Ovary (tissue), 10 donors: ENCODE measurements at regions of chr11 and their contacts with region 1.

Region 1: DNA sequence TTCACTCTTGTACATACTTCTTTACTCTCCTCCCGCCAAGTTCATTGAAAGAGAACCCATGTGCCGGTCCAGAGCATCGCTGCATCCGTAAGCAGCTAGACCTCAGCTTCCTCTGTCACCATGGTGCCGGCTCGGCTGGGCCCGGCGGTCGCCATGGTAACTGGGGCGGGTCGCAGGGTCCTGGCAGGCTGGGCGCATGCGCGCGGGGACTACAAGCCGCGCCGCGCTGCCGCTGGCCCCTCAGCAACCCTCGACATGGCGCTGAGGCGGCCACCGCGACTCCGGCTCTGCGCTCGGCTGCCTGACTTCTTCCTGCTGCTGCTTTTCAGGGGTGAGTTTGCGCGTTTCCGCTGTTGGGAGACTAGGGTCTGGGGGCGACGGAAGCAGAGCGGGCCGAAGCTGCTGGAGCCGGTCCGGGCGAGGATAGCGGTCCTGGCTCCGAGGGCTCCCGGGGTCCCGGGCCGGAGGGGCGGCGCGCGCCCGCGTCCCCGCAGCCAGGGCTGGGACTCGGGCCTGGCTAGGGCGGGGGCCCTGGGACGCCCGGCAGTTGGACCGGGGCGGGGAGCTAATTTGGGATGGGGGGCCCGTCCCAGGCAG is at the start of gene JAM3:
- DNase-seq: peak; percentile 96 to 98 (median 97)
- H3K4me3 ChIP-seq: peak within 1 kb of the TSS; percentile 69
- H3K27ac ChIP-seq: peak within 1 kb of the TSS; percentile 74 to 84
- H3K4me1 ChIP-seq: no peaks in the 10 kb centered on the region
- H3K27me3 ChIP-seq: no peaks in the 10 kb centered on the region
- CTCF ChIP-seq: peak in 1 of 3 donors; percentile 9
- EP300 ChIP-seq: no peak
- POLR2A ChIP-seq: peak; percentile 88
- total RNA-seq, gene JAM3: 32.5 to 95.0 (median 72.3) TPM

Region 2: GRCh38 chr11:133927690-133928627 is 141.0 kb before region 1 on chr11:
- intact Hi-C with region 1: no loop called
- DNase-seq: peak; percentile 52 to 77 (median 65)
- H3K4me3 ChIP-seq: no peak overlapping the region
- H3K27ac ChIP-seq: no peak overlapping the region
- H3K4me1 ChIP-seq: no peaks in the 10 kb centered on the region
- H3K27me3 ChIP-seq: no peaks in the 10 kb centered on the region
- CTCF ChIP-seq: peak; percentile 41 to 78 (median 73)
- EP300 ChIP-seq: no peak
- POLR2A ChIP-seq: no peak

Region 3: GRCh38 chr11:134032501-134033091 is 36.3 kb before region 1 on chr11:
- intact Hi-C with region 1: no loop called
- DNase-seq: peak in 3 of 5 donors; percentile 25 to 55 (median 54)
- H3K4me3 ChIP-seq: no peak overlapping the region
- H3K27ac ChIP-seq: no peak overlapping the region
- H3K4me1 ChIP-seq: peaks cover 7% of the 10 kb centered on the region
- H3K27me3 ChIP-seq: no peaks in the 10 kb centered on the region
- CTCF ChIP-seq: no peak
- EP300 ChIP-seq: no peak
- POLR2A ChIP-seq: no peak

Region 4: GRCh38 chr11:134119094-134119493 is 50.2 kb after region 1 on chr11:
- intact Hi-C with region 1: loop called in 1 of 4 experiments (anchors 5 kb)
- DNase-seq: no peak
- H3K4me3 ChIP-seq: no peak overlapping the region
- H3K27ac ChIP-seq: peak overlapping the region; percentile 70 to 83
- H3K4me1 ChIP-seq: peaks cover 6% of the 10 kb centered on the region
- H3K27me3 ChIP-seq: no peaks in the 10 kb centered on the region
- CTCF ChIP-seq: no peak
- EP300 ChIP-seq: no peak
- POLR2A ChIP-seq: no peak